ENCODE measurements at regions of chr7 and their contacts with region 1.

Region 1: GRCh38 chr7:32164346-32164957 is 94.2 kb upstream of the PDE1C start:
- DNase-seq: peak; percentile 81
- H3K4me3 ChIP-seq: no peak overlapping the region
- H3K27ac ChIP-seq: no peak overlapping the region
- H3K4me1 ChIP-seq: peaks cover 35% of the 10 kb centered on the region
- H3K27me3 ChIP-seq: no peaks in the 10 kb centered on the region
- CTCF ChIP-seq: peak; percentile 71 to 79

Region 2: GRCh38 chr7:31648288-31648687 is 516.2 kb before region 1 on chr7:
- CTCF ChIA-PET with region 1: no interaction called
- dilution Hi-C with region 1: no loop called
- in situ Hi-C with region 1: no loop called
- intact Hi-C with region 1: loop called (anchors 10 kb)
- DNase-seq: no peak
- H3K4me3 ChIP-seq: no peak overlapping the region
- H3K27ac ChIP-seq: no peak overlapping the region
- H3K4me1 ChIP-seq: peaks cover 10% of the 10 kb centered on the region
- H3K27me3 ChIP-seq: no peaks in the 10 kb centered on the region
- CTCF ChIP-seq: peak; percentile 8 to 44

Region 3: DNA sequence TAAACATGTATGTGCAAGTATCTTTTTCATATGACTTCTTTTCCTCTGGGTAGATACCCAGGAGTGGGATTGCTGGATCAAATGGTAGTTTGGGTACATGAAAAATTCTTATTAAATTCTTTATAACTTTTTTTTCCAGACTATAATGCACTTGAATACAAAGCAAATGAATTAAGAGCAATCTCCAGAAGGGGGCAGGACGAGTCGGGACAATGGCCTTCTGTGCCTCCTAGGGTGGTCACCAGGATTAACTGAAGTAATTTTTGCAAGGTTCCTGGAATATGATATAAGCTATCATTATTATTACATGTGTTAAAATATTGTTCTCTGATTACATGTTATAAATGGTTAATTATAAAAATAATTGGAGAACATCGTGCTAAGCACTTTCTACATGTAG is 350.3 kb before region 1 on chr7:
- CTCF ChIA-PET with region 1: no interaction called
- dilution Hi-C with region 1: no loop called
- in situ Hi-C with region 1: no loop called
- intact Hi-C with region 1: loop called (anchors 1 kb)
- DNase-seq: no peak
- H3K4me3 ChIP-seq: no peak overlapping the region
- H3K27ac ChIP-seq: no peak overlapping the region
- H3K4me1 ChIP-seq: no peaks in the 10 kb centered on the region
- H3K27me3 ChIP-seq: no peaks in the 10 kb centered on the region
- CTCF ChIP-seq: peak in 1 of 2 donors; percentile 30

Region 4: DNA sequence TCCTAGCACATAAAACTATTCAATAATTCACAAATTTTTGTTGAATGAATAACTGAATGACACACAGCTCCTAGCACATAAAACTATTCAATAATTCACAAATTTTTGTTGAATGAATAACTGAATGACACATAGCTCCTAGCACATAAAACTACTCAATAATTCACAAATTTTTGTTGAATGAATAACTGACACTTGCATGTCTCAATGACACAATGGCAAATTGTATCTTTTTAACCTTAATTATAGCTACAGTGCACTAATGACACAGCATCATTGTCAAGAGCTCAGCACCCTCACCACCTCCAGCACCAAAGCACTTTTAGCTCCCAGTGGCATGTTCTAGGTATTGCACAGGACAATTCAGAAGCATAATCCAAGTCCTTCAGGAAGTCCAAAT is 225.8 kb before region 1 on chr7:
- CTCF ChIA-PET with region 1: interaction called, 7 read pairs
- dilution Hi-C with region 1: no loop called
- in situ Hi-C with region 1: no loop called
- intact Hi-C with region 1: loop called (anchors 5 kb)
- DNase-seq: peak; percentile 77
- H3K4me3 ChIP-seq: no peak overlapping the region
- H3K27ac ChIP-seq: peak overlapping the region; percentile 55
- H3K4me1 ChIP-seq: peaks cover 68% of the 10 kb centered on the region
- H3K27me3 ChIP-seq: no peaks in the 10 kb centered on the region
- CTCF ChIP-seq: peak; percentile 47 to 56

Region 5: GRCh38 chr7:32062150-32062549 is 102.3 kb before region 1 on chr7:
- CTCF ChIA-PET with region 1: no interaction called
- dilution Hi-C with region 1: no loop called
- in situ Hi-C with region 1: loop called in 1 of 2 experiments (anchors 10 kb)
- intact Hi-C with region 1: loop called (anchors 1 kb)
- DNase-seq: peak; percentile 64
- H3K4me3 ChIP-seq: peak overlapping the region in 2 of 3 experiments; percentile 21 to 26
- H3K27ac ChIP-seq: no peak overlapping the region
- H3K4me1 ChIP-seq: peaks cover 26% of the 10 kb centered on the region
- H3K27me3 ChIP-seq: no peaks in the 10 kb centered on the region
- CTCF ChIP-seq: peak; percentile 73 to 79

Region 6: GRCh38 chr7:32115831-32116230 is 48.6 kb before region 1 on chr7:
- CTCF ChIA-PET with region 1: no interaction called
- dilution Hi-C with region 1: no loop called
- in situ Hi-C with region 1: no loop called
- intact Hi-C with region 1: loop called (anchors 2 kb)
- DNase-seq: peak; percentile 73
- H3K4me3 ChIP-seq: no peak overlapping the region
- H3K27ac ChIP-seq: peak overlapping the region; percentile 60
- H3K4me1 ChIP-seq: peaks cover 30% of the 10 kb centered on the region
- H3K27me3 ChIP-seq: no peaks in the 10 kb centered on the region
- CTCF ChIP-seq: no peak

Region 7: DNA sequence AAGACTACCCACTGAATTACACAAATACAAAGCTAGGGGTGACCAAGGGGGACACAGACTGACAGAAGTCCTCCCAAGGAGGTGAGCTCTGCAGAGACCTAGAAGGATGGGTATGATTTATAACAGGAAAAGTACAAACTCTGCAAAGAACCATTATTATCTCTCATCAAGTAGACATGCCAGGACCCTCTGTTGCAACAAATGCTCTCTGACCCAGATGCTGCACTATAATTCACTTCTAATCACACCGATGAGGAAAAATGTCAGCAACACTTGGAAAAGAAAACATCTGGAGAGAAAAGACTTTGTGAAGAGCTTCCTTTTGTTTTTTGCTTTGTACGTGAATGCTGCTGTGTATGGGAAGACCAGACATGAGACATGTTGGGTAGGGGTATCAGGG is 84.1 kb after region 1 on chr7:
- CTCF ChIA-PET with region 1: no interaction called
- dilution Hi-C with region 1: no loop called
- in situ Hi-C with region 1: no loop called
- intact Hi-C with region 1: no loop called
- DNase-seq: no peak
- H3K4me3 ChIP-seq: no peak overlapping the region
- H3K27ac ChIP-seq: no peak overlapping the region
- H3K4me1 ChIP-seq: no peaks in the 10 kb centered on the region
- H3K27me3 ChIP-seq: peaks cover 2% of the 10 kb centered on the region
- CTCF ChIP-seq: no peak

Measured in mammary epithelial cell (primary cell).